ENCODE measurements at regions of chr15 and their contacts with region 1.

Region 1: GRCh38 chr15:98647774-98648653 is at the start of gene IGF1R:
- DNase-seq: peak; percentile 87 to 98 (median 94)
- ATAC-seq: peak; percentile 86
- H3K4me3 ChIP-seq: peak within 1 kb of the TSS; percentile 74
- H3K4me3 Mint-ChIP-seq: peak within 1 kb of the TSS; percentile 83 to 98 (median 92)
- H3K27ac ChIP-seq: peak within 1 kb of the TSS; percentile 82
- H3K27ac Mint-ChIP-seq: peak within 1 kb of the TSS; percentile 89 to 97 (median 93)
- H3K4me1 ChIP-seq: peaks cover 0 to 11% of the 10 kb centered on the region in 2 donors
- H3K4me1 Mint-ChIP-seq: peaks cover 14 to 41% (median 29%) of the 10 kb centered on the region in 7 donors
- H3K27me3 ChIP-seq: peaks cover 0 to 16% of the 10 kb centered on the region in 2 donors
- H3K27me3 Mint-ChIP-seq: peaks cover 0 to 58% (median 0%) of the 10 kb centered on the region in 5 donors
- total RNA-seq, gene IGF1R: 37.4 to 167 (median 124) TPM

Region 2: GRCh38 chr15:97960364-97961066 is 687.5 kb before region 1 on chr15 and contains the start of gene ARRDC4:
- CTCF ChIA-PET with region 1: no interaction called
- POLR2A ChIA-PET with region 1: no interaction called
- intact Hi-C with region 1: loop called in 1 of 2 experiments (anchors 2 kb)
- DNase-seq: peak; percentile 85 to 100 (median 100)
- ATAC-seq: peak; percentile 97
- H3K4me3 ChIP-seq: peak within 1 kb of the TSS; percentile 45
- H3K4me3 Mint-ChIP-seq: peak within 1 kb of the TSS; percentile 78 to 93 (median 86)
- H3K27ac ChIP-seq: peak within 1 kb of the TSS; percentile 79
- H3K27ac Mint-ChIP-seq: peak within 1 kb of the TSS; percentile 71 to 98 (median 88)
- H3K4me1 ChIP-seq: peaks cover 0 to 13% of the 10 kb centered on the region in 2 donors
- H3K4me1 Mint-ChIP-seq: peaks cover 14 to 41% (median 21%) of the 10 kb centered on the region in 7 donors
- H3K27me3 ChIP-seq: no peaks in the 10 kb centered on the region
- H3K27me3 Mint-ChIP-seq: peaks cover 0 to 40% (median 0%) of the 10 kb centered on the region in 5 donors
- total RNA-seq, gene ARRDC4: 0.59 to 6.8 (median 1.1) TPM

Region 3: DNA sequence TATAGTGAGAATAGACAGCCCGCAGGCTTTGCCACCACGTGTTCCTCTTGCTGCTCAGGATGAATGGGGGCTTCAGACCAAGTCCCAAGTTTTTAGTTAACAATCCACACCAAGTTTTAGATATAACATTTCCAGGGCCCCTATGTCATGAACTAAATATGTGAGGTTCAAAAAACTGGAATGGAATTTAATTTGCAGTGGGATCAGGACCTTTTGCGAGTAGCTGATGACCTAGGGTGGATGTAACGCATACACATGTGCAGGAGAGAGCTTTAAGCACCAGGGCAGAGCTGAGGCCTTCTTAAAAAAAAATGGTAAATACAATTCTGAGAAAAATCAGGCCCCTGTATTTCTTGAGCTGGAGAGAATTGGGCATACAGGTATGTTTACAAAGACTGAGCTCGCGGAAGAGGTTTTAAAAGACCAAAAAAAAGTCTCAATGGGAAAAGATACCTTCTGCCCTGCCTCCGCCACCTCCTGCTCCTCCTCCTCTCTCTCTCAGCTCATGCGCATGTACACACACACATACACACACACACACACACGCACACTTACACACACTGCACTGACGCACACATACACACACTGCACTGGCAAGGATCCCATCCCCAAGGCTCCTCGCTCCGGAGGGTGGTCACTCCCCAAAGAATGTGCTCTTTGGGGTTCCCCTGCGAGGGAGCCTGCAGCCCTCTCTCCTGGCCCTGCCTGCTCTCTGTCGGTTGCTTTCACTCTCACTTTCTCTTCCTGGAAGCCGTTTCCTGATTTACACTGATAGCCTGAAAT is 47.9 kb before region 1 on chr15:
- CTCF ChIA-PET with region 1: interaction called, 20 read pairs
- POLR2A ChIA-PET with region 1: interaction called, 76 read pairs
- intact Hi-C with region 1: loop called (anchors 1 kb)
- DNase-seq: peak in 8 of 9 donors; percentile 39 to 52 (median 49)
- ATAC-seq: peak; percentile 84
- H3K4me3 ChIP-seq: peak overlapping the region; percentile 70
- H3K4me3 Mint-ChIP-seq: peak overlapping the region; percentile 87 to 99 (median 94)
- H3K27ac ChIP-seq: peak overlapping the region; percentile 77
- H3K27ac Mint-ChIP-seq: peak overlapping the region; percentile 91 to 98 (median 95)
- H3K4me1 ChIP-seq: peaks cover 0 to 15% of the 10 kb centered on the region in 2 donors
- H3K4me1 Mint-ChIP-seq: peaks cover 12 to 44% (median 24%) of the 10 kb centered on the region in 7 donors
- H3K27me3 ChIP-seq: no peaks in the 10 kb centered on the region
- H3K27me3 Mint-ChIP-seq: peaks cover 0 to 23% (median 0%) of the 10 kb centered on the region in 5 donors

Region 4: DNA sequence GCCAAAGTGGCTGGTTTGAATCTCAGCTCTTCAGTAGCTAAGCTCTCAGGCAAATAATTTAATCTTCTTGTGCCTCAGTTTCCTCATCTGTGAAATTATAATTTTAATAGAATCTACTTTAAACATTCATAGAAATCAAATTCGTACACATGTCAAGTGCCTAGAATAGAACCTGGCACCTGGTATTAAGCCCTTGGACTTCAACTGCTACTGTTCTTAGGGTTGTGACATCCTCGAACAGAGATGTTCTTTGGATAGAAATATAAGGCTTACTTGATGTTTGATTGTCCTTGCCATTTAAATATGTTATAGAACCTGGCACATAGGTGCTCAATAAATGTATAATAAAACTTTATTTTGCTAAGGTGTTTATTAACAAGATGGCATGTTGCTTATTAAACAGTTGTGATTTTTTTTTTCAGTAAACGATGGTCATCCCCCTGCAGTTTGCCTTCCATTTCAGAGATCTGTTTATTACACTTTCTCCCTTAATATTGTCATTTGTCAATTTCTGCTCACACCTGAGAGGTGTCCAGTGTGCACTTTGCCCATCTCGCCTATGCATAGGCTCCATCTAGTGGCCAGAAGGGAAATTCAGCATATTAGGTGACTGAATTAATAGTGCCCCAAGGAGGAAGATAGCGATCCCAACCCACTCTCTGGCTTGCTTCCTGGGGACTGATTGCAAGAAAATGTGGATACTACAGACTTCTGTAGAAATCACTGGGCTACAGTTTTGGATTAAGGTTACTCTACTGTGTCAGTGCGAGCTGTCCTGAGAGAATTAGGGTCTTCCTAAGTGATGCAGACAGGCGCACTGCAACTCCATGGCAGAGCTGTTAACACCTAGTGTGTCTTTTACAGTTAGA is 11.1 kb after region 1 on chr15:
- CTCF ChIA-PET with region 1: interaction called, 17 read pairs
- POLR2A ChIA-PET with region 1: interaction called, 23 read pairs
- intact Hi-C with region 1: loop called (anchors 1 kb)
- DNase-seq: peak in 7 of 9 donors; percentile 24 to 56 (median 49)
- ATAC-seq: peak; percentile 85
- H3K4me3 ChIP-seq: no peak overlapping the region
- H3K4me3 Mint-ChIP-seq: no peak overlapping the region
- H3K27ac ChIP-seq: no peak overlapping the region
- H3K27ac Mint-ChIP-seq: peak overlapping the region in 2 of 9 donors; percentile 43 to 73
- H3K4me1 ChIP-seq: peaks cover 0 to 23% of the 10 kb centered on the region in 2 donors
- H3K4me1 Mint-ChIP-seq: peaks cover 15 to 79% (median 71%) of the 10 kb centered on the region in 7 donors
- H3K27me3 ChIP-seq: no peaks in the 10 kb centered on the region
- H3K27me3 Mint-ChIP-seq: peaks cover 0 to 6% (median 0%) of the 10 kb centered on the region in 5 donors

Region 5: DNA sequence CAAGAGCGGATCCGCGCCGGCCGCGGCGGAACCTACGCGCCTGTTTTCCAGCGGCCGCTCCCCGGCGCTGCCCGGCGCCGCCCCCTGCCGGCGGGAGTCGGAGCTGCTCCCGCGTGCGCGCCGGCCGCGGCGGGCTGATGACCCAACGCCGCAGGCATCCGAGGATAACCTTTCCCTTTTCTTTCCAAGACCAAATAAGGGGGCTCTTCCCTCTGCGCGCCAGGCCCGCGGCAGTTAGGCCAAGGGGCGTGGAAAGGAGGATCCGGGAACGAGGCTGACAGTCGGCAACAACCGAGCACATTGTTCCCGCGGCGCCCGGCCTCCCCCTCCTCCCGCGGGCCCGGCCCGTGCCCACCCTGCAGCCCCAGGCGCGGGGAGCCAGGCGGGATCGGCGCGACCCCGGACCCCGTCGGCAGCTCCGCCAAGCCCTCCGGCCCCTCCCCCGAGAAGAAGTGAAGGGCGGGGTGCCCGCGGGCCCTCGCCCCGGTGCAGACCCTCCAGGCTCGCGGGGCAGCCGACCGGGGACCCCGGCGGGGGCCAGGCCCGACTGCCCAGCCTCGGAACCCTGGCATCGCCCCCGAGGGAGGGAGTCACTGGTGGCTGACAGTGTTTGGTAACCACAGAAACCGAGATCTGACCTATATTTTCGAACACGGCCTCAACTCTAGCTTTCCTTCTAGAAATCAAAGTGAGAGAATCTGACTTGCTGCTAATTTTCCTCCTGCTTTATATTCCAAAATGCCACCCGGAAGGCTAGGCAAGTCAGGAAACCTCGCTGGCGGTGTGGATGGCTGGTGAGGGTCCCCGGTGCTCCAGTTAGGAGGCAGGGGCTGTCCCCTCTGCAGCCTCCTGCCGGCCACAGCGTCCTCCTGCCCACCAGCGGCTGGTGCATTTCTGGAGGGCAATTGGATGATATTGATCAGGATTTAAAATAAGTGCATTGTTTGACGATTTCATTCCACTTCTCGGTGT is 411.3 kb after region 1 on chr15:
- CTCF ChIA-PET with region 1: no interaction called
- POLR2A ChIA-PET with region 1: no interaction called
- intact Hi-C with region 1: loop called in 1 of 2 experiments (anchors 5 kb)
- DNase-seq: peak in 8 of 9 donors; percentile 14 to 75 (median 50)
- ATAC-seq: peak; percentile 85
- H3K4me3 ChIP-seq: peak overlapping the region; percentile 50
- H3K4me3 Mint-ChIP-seq: peak overlapping the region; percentile 66 to 83 (median 70)
- H3K27ac ChIP-seq: no peak overlapping the region
- H3K27ac Mint-ChIP-seq: no peak overlapping the region
- H3K4me1 ChIP-seq: peaks cover 0 to 3% of the 10 kb centered on the region in 2 donors
- H3K4me1 Mint-ChIP-seq: peaks cover 0 to 14% (median 8%) of the 10 kb centered on the region in 7 donors
- H3K27me3 ChIP-seq: peaks cover 0 to 18% of the 10 kb centered on the region in 2 donors
- H3K27me3 Mint-ChIP-seq: peaks cover 29 to 59% (median 37%) of the 10 kb centered on the region in 5 donors

Region 6: GRCh38 chr15:99928429-99928981 is 1280.5 kb after region 1 on chr15:
- CTCF ChIA-PET with region 1: no interaction called
- POLR2A ChIA-PET with region 1: interaction called, 5 read pairs
- intact Hi-C with region 1: loop called in 1 of 2 experiments (anchors 2 kb)
- DNase-seq: peak; percentile 68 to 93 (median 91)
- ATAC-seq: peak; percentile 97
- H3K4me3 ChIP-seq: peak overlapping the region; percentile 56
- H3K4me3 Mint-ChIP-seq: peak overlapping the region; percentile 79 to 92 (median 88)
- H3K27ac ChIP-seq: peak overlapping the region; percentile 76
- H3K27ac Mint-ChIP-seq: peak overlapping the region; percentile 80 to 95 (median 89)
- H3K4me1 ChIP-seq: peaks cover 12 to 17% of the 10 kb centered on the region in 2 donors
- H3K4me1 Mint-ChIP-seq: peaks cover 13 to 28% (median 19%) of the 10 kb centered on the region in 7 donors
- H3K27me3 ChIP-seq: no peaks in the 10 kb centered on the region
- H3K27me3 Mint-ChIP-seq: peaks cover 0 to 27% (median 0%) of the 10 kb centered on the region in 5 donors